AG04450 (cell line): ENCODE measurements at regions of chr15 and their contacts with region 1.

Region 1: GRCh38 chr15:83112233-83112955 is 4.9 kb downstream of the TM6SF1 start:
- DNase-seq: peak; percentile 78
- H3K4me3 ChIP-seq: peak overlapping the region; percentile 23
- H3K27ac ChIP-seq: peak overlapping the region; percentile 84
- H3K27me3 ChIP-seq: no peaks in the 10 kb centered on the region
- CTCF ChIP-seq: 0 out of 2 replicates have a peak, but pooled peaks have one; percentile 32

Region 2: DNA sequence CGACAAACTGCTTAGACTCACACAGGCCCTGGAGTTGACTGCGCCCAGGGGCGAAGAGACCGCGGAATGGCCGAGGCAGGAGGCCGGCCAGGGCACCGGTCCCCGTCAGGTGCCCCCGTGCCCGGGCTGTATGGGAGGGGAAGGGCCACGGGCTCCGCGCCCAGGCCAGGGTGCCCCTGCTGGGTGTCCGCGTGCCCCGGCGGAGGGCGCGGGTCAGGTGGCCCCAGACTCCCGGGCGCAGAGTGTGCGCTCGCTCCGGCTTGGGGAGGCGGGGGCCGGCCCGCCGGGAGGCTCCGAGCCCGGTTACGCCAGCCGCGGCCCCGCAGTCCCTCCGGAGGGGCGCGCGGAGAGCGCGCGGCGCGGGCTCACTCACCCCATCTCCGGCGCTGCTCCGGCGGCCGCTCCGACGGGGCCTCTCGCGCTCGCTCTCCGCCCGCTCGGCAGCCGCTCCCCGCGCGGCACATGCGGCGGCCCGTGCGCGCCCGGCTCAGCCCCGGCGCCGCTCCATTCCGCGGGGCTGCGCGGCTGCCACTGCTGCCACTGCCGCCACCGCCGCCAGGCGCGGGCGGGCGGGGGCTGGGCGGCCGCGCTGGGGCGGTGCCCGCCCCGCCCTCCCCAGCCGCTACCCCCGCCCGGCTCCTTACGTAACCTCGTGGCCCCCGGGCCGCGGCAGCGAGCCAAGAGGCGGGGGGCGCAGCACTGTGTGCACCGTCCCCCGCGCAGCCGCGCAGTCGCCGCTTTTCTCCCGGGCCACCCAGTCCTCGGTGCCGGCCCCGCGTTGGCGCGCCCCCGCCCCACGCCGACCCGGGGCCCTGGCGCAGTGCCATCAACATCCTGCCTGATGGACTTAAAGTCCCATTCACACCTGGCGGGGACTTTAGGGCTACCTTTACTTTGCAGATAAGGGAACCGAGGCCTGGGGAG is 160.0 kb before region 1 on chr15 and contains the start of gene HOMER2:
- CTCF ChIA-PET with region 1: no interaction called
- POLR2A ChIA-PET with region 1: no interaction called
- DNase-seq: no peak
- H3K4me3 ChIP-seq: peak within 1 kb of the TSS; percentile 17; the same call in 1 of the 2 replicates
- H3K27ac ChIP-seq: no peak within 1 kb of the TSS
- H3K27me3 ChIP-seq: peaks cover 18% of the 10 kb centered on the region
- CTCF ChIP-seq: no peak
- polyA plus RNA-seq, gene HOMER2: 0.61 and 1.1 TPM in 2 replicates

Region 3: DNA sequence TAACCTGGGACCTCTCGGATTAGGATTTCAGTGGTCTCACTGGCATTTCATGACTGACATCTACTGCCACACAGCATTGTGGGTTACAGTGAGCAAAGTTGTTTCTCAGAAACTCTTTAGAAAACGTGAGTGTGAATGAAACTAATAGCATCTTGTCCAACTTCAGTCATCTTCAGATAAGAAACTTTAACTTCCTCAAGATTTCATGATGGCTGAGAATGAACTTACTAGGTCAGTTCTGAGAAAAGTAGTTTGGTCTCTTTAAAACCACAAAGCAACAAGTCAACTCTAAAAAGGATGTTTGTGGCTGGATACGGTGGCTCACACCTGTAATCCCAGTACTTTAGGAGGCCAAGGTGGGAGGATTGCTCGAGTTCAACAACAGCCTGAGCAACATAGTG is 145.7 kb before region 1 on chr15:
- CTCF ChIA-PET with region 1: interaction called, 10 read pairs
- POLR2A ChIA-PET with region 1: no interaction called
- DNase-seq: no peak
- H3K4me3 ChIP-seq: no peak overlapping the region
- H3K27ac ChIP-seq: no peak overlapping the region
- H3K27me3 ChIP-seq: no peaks in the 10 kb centered on the region
- CTCF ChIP-seq: no peak

Region 4: DNA sequence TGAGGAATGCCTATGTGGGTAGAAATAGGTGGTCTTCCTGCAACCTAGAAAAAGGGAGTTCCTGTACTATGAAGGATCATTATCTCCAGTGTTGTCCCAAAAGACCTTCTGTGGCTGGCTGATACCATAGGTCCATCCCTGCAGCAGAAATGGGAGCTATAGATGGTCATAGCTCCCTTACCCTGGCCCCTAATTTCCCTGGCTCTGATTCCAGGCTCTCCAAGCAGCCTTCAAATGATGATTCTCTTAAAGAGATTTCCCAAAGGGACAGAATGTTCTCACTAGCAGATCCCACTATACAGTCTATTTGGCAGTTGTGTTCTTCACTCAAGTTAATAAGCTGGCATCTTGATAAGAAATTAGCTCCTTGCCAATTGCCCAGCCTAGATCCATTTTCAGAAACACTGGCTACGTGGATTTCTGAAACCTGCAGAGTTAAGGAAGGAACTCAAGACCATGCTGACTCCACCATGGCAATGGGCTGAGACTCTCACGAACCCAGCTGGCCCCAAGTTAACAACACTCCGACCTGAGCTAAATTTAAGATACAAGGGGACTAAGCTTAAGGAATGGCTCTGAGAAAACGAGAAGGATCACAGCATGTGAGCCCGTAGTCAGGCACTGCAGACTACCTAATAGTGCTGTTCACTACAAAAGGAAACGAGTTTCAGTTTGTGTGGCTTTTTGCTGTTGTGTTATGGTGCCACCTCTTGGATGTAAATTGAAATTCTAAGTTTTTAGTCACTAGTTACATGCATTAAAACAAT is 112.3 kb before region 1 on chr15:
- CTCF ChIA-PET with region 1: no interaction called
- POLR2A ChIA-PET with region 1: no interaction called
- DNase-seq: no peak
- H3K4me3 ChIP-seq: peak overlapping the region; percentile 45
- H3K27ac ChIP-seq: no peak overlapping the region
- H3K27me3 ChIP-seq: no peaks in the 10 kb centered on the region
- CTCF ChIP-seq: peak; percentile 55

Region 5: DNA sequence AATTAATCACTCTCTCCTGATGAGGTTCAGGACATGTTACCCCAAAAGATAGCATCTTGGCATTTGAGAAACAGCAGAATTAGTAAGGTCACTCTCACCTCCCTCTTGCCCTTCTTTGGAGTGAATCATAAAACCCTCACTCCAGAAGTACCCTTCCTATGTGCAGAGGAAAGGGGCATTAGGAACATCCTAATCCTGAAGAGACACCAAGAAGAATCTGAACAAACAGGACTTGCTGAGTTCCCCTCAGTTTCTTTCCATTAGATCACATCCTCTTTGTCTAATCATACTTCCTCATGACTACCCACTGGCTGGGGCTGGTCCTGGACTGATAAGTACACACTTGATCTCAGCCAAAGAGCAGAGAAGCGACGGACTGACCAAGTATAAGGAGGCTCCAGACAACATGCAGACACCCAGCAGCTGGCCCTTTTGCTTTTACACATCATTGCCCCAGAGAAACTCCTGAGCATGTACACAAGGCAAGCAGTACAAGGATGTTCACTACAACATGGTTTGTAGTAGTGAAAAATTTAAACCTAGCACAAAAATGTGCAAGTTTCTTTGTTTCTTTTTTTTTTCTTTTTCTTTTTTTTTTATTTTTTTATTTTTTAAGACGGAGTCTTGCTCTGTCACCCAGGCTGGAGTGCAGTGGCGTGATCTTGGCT is 20.0 kb before region 1 on chr15:
- CTCF ChIA-PET with region 1: no interaction called
- POLR2A ChIA-PET with region 1: no interaction called
- DNase-seq: peak; percentile 18
- H3K4me3 ChIP-seq: no peak overlapping the region
- H3K27ac ChIP-seq: no peak overlapping the region
- H3K27me3 ChIP-seq: no peaks in the 10 kb centered on the region
- CTCF ChIP-seq: no peak